Naive thymus-derived CD4-positive, alpha-beta T cell (primary cell): ENCODE measurements at regions of chr10 and their contacts with region 1.

Region 1: GRCh38 chr10:86399879-86400704 is 33.5 kb upstream of the GRID1 start:
- DNase-seq: peak; percentile 86 to 93 (median 90)
- ATAC-seq: peak; percentile 95
- H3K4me3 ChIP-seq: peak overlapping the region; percentile 86
- H3K4me3 Mint-ChIP-seq: peak overlapping the region; percentile 79 to 95 (median 89)
- H3K27ac ChIP-seq: peak overlapping the region; percentile 76
- H3K27ac Mint-ChIP-seq: peak overlapping the region; percentile 83 to 97 (median 93)
- H3K4me1 ChIP-seq: peaks cover 0 to 10% of the 10 kb centered on the region in 2 donors
- H3K4me1 Mint-ChIP-seq: peaks cover 5 to 28% (median 23%) of the 10 kb centered on the region in 7 donors
- H3K27me3 ChIP-seq: no peaks in the 10 kb centered on the region
- H3K27me3 Mint-ChIP-seq: peaks cover 0 to 19% (median 0%) of the 10 kb centered on the region in 5 donors

Region 2: GRCh38 chr10:85612833-85613232 is 787.3 kb before region 1 on chr10:
- CTCF ChIA-PET with region 1: no interaction called
- POLR2A ChIA-PET with region 1: no interaction called
- intact Hi-C with region 1: loop called in 1 of 2 experiments (anchors 5 kb)
- DNase-seq: peak in 4 of 9 donors; percentile 19 to 35 (median 24)
- ATAC-seq: peak; percentile 56
- H3K4me3 ChIP-seq: peak overlapping the region; percentile 44
- H3K4me3 Mint-ChIP-seq: peak overlapping the region; percentile 69 to 88 (median 78)
- H3K27ac ChIP-seq: no peak overlapping the region
- H3K27ac Mint-ChIP-seq: peak overlapping the region; percentile 54 to 94 (median 83)
- H3K4me1 ChIP-seq: peaks cover 36 to 44% of the 10 kb centered on the region in 2 donors
- H3K4me1 Mint-ChIP-seq: peaks cover 30 to 81% (median 71%) of the 10 kb centered on the region in 7 donors
- H3K27me3 ChIP-seq: no peaks in the 10 kb centered on the region
- H3K27me3 Mint-ChIP-seq: peaks cover 0 to 34% (median 0%) of the 10 kb centered on the region in 5 donors

Region 3: DNA sequence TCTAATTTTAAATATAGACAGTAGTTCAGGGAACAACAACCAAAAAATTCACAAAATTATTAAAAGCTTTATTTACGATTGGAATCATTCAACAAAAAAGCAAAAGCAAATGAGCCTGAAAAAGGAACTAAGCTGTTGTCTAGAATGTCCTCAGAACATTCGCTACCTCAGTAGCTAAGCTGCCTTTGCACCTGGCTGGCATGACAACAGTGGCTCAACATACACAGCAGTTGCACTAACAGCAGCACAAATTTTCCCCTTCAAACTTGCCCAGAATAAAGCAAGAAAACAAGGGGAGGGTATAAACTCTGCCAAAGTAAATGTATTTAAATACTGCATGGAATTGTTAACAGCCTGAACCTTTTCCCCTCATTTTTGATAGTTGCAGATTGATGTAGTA is 36.9 kb after region 1 on chr10:
- CTCF ChIA-PET with region 1: interaction called, 3 read pairs
- POLR2A ChIA-PET with region 1: interaction called, 3 read pairs
- intact Hi-C with region 1: loop called in 1 of 2 experiments (anchors 2 kb)
- DNase-seq: no peak
- ATAC-seq: no peak
- H3K4me3 ChIP-seq: no peak overlapping the region
- H3K4me3 Mint-ChIP-seq: no peak overlapping the region
- H3K27ac ChIP-seq: no peak overlapping the region
- H3K27ac Mint-ChIP-seq: peak overlapping the region in 1 of 9 donors; percentile 15
- H3K4me1 ChIP-seq: no peaks in the 10 kb centered on the region
- H3K4me1 Mint-ChIP-seq: peaks cover 11 to 25% (median 23%) of the 10 kb centered on the region in 7 donors
- H3K27me3 ChIP-seq: no peaks in the 10 kb centered on the region
- H3K27me3 Mint-ChIP-seq: no peaks in the 10 kb centered on the region

Region 4: GRCh38 chr10:86535057-86535882 is 135.2 kb after region 1 on chr10:
- CTCF ChIA-PET with region 1: interaction called, 6 read pairs
- POLR2A ChIA-PET with region 1: interaction called, 3 read pairs
- intact Hi-C with region 1: loop called in 1 of 2 experiments (anchors 1 kb)
- DNase-seq: peak in 3 of 9 donors; percentile 10 to 31 (median 14)
- ATAC-seq: peak; percentile 55
- H3K4me3 ChIP-seq: no peak overlapping the region
- H3K4me3 Mint-ChIP-seq: peak overlapping the region; percentile 62 to 88 (median 77)
- H3K27ac ChIP-seq: no peak overlapping the region
- H3K27ac Mint-ChIP-seq: peak overlapping the region in 8 of 9 donors; percentile 36 to 93 (median 75)
- H3K4me1 ChIP-seq: peaks cover 0 to 21% of the 10 kb centered on the region in 2 donors
- H3K4me1 Mint-ChIP-seq: peaks cover 21 to 42% (median 38%) of the 10 kb centered on the region in 7 donors
- H3K27me3 ChIP-seq: no peaks in the 10 kb centered on the region
- H3K27me3 Mint-ChIP-seq: no peaks in the 10 kb centered on the region

Region 5: GRCh38 chr10:86644152-86644793 is 244.2 kb after region 1 on chr10:
- CTCF ChIA-PET with region 1: no interaction called
- POLR2A ChIA-PET with region 1: no interaction called
- intact Hi-C with region 1: loop called in 1 of 2 experiments (anchors 1 kb)
- DNase-seq: no peak
- ATAC-seq: no peak
- H3K4me3 ChIP-seq: no peak overlapping the region
- H3K4me3 Mint-ChIP-seq: no peak overlapping the region
- H3K27ac ChIP-seq: no peak overlapping the region
- H3K27ac Mint-ChIP-seq: no peak overlapping the region
- H3K4me1 ChIP-seq: no peaks in the 10 kb centered on the region
- H3K4me1 Mint-ChIP-seq: peaks cover 0 to 13% (median 0%) of the 10 kb centered on the region in 7 donors
- H3K27me3 ChIP-seq: no peaks in the 10 kb centered on the region
- H3K27me3 Mint-ChIP-seq: peaks cover 7 to 22% (median 14%) of the 10 kb centered on the region in 5 donors

Region 6: DNA sequence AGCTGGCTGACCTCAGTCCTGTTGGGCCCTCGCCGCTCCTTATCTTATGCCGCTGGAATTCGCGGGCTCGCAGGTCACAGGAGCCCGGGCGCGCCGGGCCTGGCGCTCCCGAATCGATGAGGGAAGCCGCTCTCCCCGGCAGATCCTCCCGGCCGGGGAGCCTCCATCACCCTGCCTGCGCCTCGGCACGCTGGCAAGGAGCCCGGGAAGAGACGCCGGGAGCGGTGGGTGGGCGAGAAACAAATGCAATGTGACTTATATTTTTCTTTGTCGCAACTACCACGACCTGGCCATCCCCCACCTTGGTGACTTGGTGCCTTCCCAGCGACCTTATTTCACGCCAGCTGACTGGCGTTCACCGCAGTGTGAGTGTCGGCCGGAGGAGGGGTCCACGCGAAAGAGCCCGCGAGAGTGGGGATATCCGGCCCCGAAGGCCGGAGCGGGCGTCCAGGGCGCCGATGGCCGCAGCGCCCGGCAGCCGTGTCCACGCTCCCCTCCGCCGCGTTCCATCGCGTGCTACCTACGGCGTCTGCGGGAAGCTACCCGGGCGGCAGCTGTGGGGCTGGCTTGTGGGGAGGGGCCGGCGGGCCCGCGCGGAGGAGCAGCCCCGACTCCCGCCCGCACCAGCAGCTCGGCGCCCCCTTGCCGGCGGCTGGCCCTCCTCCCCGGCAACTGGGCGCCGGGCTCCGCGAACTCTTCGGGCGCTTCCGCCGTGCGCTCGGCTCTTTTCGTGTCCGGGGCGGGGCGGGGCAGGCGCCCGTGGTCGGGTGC is 355.8 kb after region 1 on chr10:
- CTCF ChIA-PET with region 1: no interaction called
- POLR2A ChIA-PET with region 1: no interaction called
- intact Hi-C with region 1: loop called (anchors 2 to 5 kb)
- DNase-seq: peak; percentile 68 to 95 (median 82)
- ATAC-seq: peak; percentile 97
- H3K4me3 ChIP-seq: peak overlapping the region; percentile 73
- H3K4me3 Mint-ChIP-seq: peak overlapping the region; percentile 78 to 95 (median 86)
- H3K27ac ChIP-seq: peak overlapping the region; percentile 50
- H3K27ac Mint-ChIP-seq: peak overlapping the region in 4 of 9 donors; percentile 31 to 71 (median 50)
- H3K4me1 ChIP-seq: peaks cover 9 to 11% of the 10 kb centered on the region in 2 donors
- H3K4me1 Mint-ChIP-seq: peaks cover 13 to 47% (median 36%) of the 10 kb centered on the region in 7 donors
- H3K27me3 ChIP-seq: peaks cover 0 to 6% of the 10 kb centered on the region in 2 donors
- H3K27me3 Mint-ChIP-seq: peaks cover 24 to 52% (median 31%) of the 10 kb centered on the region in 5 donors